CD4-positive, alpha-beta memory T cell (primary cell): ENCODE measurements at regions of chr9 and their contacts with region 1.

Region 1: DNA sequence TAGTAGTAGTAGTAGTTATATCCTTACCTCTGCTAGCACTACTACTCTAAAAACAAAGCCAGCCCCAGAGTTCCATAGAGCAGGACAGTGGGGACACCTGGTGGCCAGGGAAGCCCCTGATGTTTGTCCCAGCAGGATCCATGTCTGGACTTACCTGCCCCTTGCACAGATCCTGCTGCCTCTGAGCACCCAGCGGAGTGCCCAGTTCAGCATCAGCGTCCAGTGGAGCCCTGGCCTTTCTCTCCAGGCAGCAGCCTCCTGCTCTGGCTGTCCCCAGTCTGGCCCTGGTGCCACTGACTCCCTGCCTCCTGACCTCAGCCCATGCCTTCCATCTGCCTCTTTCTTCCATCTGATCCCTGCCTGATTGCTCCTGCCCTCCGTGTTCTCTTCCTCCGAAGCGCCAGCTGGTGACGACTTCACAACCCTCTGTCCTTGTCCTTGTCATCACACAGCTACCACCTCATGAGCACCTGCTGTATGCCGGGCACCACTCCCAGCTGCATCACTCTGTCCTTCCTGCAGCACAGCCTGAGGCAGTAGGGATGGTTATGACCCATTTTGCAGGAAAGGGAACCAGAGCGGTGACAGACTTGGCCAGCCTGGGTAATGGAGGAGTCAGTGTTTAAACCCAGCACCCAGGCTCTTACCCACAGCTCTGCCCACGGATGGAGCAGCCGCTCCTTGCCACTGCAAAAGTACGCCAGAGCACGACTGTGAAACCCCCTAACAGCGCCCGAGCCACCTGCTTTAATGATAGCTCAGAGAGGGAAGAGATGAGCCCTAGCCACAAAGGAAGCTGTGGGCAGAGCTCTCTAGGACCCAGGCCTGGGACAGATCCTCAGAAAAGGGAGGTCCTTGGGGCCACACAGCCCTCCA is 11.5 kb downstream of the SARDH start:
- DNase-seq: peak; percentile 57 to 70 (median 59)
- H3K4me3 ChIP-seq: no peak overlapping the region
- H3K4me3 Mint-ChIP-seq: peak overlapping the region in 2 of 8 donors; percentile 18 to 47
- H3K27ac ChIP-seq: no peak overlapping the region
- H3K27ac Mint-ChIP-seq: peak overlapping the region in 5 of 7 donors; percentile 19 to 81 (median 46)
- H3K4me1 ChIP-seq: peaks cover 10% of the 10 kb centered on the region
- H3K4me1 Mint-ChIP-seq: peaks cover 7 to 9% (median 8%) of the 10 kb centered on the region in 4 donors
- H3K27me3 ChIP-seq: no peaks in the 10 kb centered on the region
- H3K27me3 Mint-ChIP-seq: peaks cover 1 to 8% of the 10 kb centered on the region in 2 donors

Region 2: GRCh38 chr9:133589454-133590227 is 137.0 kb before region 1 on chr9:
- CTCF ChIA-PET with region 1: interaction called, 6 read pairs
- POLR2A ChIA-PET with region 1: no interaction called
- intact Hi-C with region 1: loop called (anchors 1 kb)
- DNase-seq: peak; percentile 20 to 45 (median 22)
- H3K4me3 ChIP-seq: no peak overlapping the region
- H3K4me3 Mint-ChIP-seq: no peak overlapping the region
- H3K27ac ChIP-seq: no peak overlapping the region
- H3K27ac Mint-ChIP-seq: no peak overlapping the region
- H3K4me1 ChIP-seq: no peaks in the 10 kb centered on the region
- H3K4me1 Mint-ChIP-seq: peaks cover 0 to 2% (median under 1%) of the 10 kb centered on the region in 4 donors
- H3K27me3 ChIP-seq: peaks cover 4% of the 10 kb centered on the region
- H3K27me3 Mint-ChIP-seq: peaks cover 2% of the 10 kb centered on the region in 2 donors

Region 3: GRCh38 chr9:133604214-133604613 is 122.4 kb before region 1 on chr9:
- CTCF ChIA-PET with region 1: interaction called, 9 read pairs
- POLR2A ChIA-PET with region 1: no interaction called
- intact Hi-C with region 1: loop called (anchors 1 kb)
- DNase-seq: peak in 3 of 5 donors; percentile 11 to 12 (median 12)
- H3K4me3 ChIP-seq: no peak overlapping the region
- H3K4me3 Mint-ChIP-seq: no peak overlapping the region
- H3K27ac ChIP-seq: no peak overlapping the region
- H3K27ac Mint-ChIP-seq: peak overlapping the region in 1 of 7 donors; percentile 71
- H3K4me1 ChIP-seq: no peaks in the 10 kb centered on the region
- H3K4me1 Mint-ChIP-seq: peaks cover 0 to 3% (median 0%) of the 10 kb centered on the region in 4 donors
- H3K27me3 ChIP-seq: peaks cover 10% of the 10 kb centered on the region
- H3K27me3 Mint-ChIP-seq: peaks cover 8 to 15% of the 10 kb centered on the region in 2 donors

Region 4: GRCh38 chr9:133658442-133659431 is 67.9 kb before region 1 on chr9:
- CTCF ChIA-PET with region 1: interaction called, 4 read pairs
- POLR2A ChIA-PET with region 1: interaction called, 3 read pairs
- intact Hi-C with region 1: loop called (anchors 1 kb)
- DNase-seq: no peak
- H3K4me3 ChIP-seq: no peak overlapping the region
- H3K4me3 Mint-ChIP-seq: peak overlapping the region in 5 of 8 donors; percentile 27 to 74 (median 69)
- H3K27ac ChIP-seq: no peak overlapping the region
- H3K27ac Mint-ChIP-seq: peak overlapping the region in 2 of 7 donors; percentile 15 to 77
- H3K4me1 ChIP-seq: peaks cover 34% of the 10 kb centered on the region
- H3K4me1 Mint-ChIP-seq: peaks cover 12 to 43% (median 24%) of the 10 kb centered on the region in 4 donors
- H3K27me3 ChIP-seq: peaks cover 6% of the 10 kb centered on the region
- H3K27me3 Mint-ChIP-seq: peaks cover 8 to 36% of the 10 kb centered on the region in 2 donors

Region 5: DNA sequence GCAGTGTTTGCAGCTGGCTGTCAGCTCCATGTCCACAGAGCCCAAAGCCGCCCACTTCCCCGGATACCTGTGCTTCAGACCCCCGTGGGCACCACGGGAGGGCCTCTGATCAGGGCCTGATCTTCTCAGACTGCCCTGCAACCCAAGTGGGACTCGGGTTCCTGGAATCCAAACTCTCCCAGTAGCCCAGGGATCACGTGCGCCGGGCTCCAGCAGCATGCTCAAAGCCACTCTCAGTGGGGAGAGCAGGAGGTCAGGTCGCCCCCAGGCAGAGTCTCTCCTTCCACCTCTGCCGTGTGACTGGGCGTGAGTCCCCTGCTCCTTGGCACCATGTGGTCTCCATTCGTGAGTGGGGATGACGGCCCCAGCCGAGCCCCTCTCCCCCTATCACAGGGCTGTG is 57.2 kb before region 1 on chr9:
- CTCF ChIA-PET with region 1: no interaction called
- POLR2A ChIA-PET with region 1: no interaction called
- intact Hi-C with region 1: no loop called
- DNase-seq: no peak
- H3K4me3 ChIP-seq: no peak overlapping the region
- H3K4me3 Mint-ChIP-seq: no peak overlapping the region
- H3K27ac ChIP-seq: no peak overlapping the region
- H3K27ac Mint-ChIP-seq: peak overlapping the region in 2 of 7 donors; percentile 10 to 72
- H3K4me1 ChIP-seq: no peaks in the 10 kb centered on the region
- H3K4me1 Mint-ChIP-seq: peaks cover 0 to 2% (median 2%) of the 10 kb centered on the region in 4 donors
- H3K27me3 ChIP-seq: no peaks in the 10 kb centered on the region
- H3K27me3 Mint-ChIP-seq: no peaks in the 10 kb centered on the region

Region 6: DNA sequence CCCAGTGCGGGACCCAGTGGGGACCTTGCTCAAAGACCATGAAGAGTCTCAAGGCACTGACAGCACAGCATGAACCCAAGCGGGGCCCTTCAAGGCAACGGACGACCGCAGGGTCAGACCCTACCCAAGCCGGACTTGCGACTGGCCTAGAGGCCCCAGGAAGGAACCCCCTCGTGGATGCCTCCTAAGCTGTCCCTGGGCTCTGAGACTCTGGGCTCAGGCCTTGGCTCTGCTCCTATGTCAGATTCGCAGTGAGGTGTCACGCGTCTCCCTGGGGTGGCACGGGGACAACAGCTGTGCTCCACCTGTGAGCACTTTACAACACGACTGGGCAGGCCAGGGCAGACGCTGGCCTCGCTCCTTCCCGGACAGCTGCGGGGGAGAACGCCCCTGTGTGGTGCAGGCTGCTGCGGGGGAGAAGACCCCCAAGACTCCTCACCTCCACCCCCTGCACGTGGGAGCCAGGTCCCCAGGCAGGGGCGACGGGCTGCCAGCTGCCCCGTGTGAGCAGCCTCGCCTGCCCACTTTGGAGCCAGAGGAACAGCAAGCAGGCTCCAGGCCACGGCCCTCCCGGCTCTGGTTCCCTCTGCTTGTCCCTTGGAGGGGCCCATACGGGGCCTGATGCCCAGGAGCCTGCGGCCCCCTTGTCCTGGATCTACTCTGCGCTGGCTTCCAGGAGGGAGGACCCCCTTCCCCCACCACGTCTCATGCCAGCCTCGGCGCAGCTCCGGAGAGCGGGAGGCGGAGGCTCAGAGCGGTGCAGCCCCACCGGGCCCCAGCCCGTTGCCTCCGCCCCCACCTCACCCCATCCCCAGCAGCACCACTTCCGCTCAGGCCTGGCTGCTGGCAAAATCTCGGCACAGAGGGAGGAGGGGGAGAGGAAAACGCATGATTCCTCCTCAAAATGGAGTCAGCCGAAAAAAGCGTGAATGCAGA is 24.5 kb before region 1 on chr9:
- CTCF ChIA-PET with region 1: interaction called, 13 read pairs
- POLR2A ChIA-PET with region 1: interaction called, 7 read pairs
- intact Hi-C with region 1: no loop called
- DNase-seq: peak; percentile 69 to 81 (median 75)
- H3K4me3 ChIP-seq: peak overlapping the region; percentile 27 to 61
- H3K4me3 Mint-ChIP-seq: peak overlapping the region; percentile 83 to 93 (median 89)
- H3K27ac ChIP-seq: peak overlapping the region; percentile 74
- H3K27ac Mint-ChIP-seq: peak overlapping the region; percentile 96 to 99 (median 98)
- H3K4me1 ChIP-seq: peaks cover 65% of the 10 kb centered on the region
- H3K4me1 Mint-ChIP-seq: peaks cover 36 to 75% (median 53%) of the 10 kb centered on the region in 4 donors
- H3K27me3 ChIP-seq: no peaks in the 10 kb centered on the region
- H3K27me3 Mint-ChIP-seq: no peaks in the 10 kb centered on the region

Region 7: DNA sequence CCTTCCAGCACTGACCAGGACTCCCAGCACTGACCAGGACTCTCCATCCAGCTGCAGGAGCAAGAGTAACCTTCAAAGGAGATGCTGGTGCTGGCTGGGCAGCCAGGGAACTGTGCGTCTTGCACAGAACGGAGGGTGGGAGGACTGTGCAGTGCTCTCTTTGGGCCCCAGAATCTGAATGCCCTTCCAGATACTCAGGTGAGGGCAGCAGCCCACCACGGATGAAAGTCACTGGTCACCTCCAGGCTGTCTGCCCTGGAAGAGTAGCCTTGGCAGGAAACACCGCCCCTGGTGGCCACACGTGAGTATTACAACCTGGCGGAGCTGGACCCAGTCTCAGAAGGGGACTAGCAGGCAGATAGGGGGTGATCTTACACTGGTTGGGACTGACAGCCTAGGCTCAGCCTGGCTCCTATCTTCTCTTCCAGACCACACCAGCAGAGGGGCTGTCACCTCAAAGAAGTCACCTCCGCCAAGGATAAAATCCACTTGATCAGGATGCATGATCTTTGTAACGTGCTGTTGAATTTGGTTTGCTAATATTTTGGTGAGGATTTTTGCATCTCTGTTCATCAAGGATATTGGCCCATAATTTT is 16.3 kb after region 1 on chr9:
- CTCF ChIA-PET with region 1: interaction called, 19 read pairs
- POLR2A ChIA-PET with region 1: interaction called, 3 read pairs
- intact Hi-C with region 1: no loop called
- DNase-seq: peak; percentile 51 to 67 (median 56)
- H3K4me3 ChIP-seq: no peak overlapping the region
- H3K4me3 Mint-ChIP-seq: no peak overlapping the region
- H3K27ac ChIP-seq: no peak overlapping the region
- H3K27ac Mint-ChIP-seq: no peak overlapping the region
- H3K4me1 ChIP-seq: peaks cover 14% of the 10 kb centered on the region
- H3K4me1 Mint-ChIP-seq: peaks cover 0 to 9% (median 4%) of the 10 kb centered on the region in 4 donors
- H3K27me3 ChIP-seq: no peaks in the 10 kb centered on the region
- H3K27me3 Mint-ChIP-seq: peaks cover 8 to 12% of the 10 kb centered on the region in 2 donors